HCT116 (cell line): ENCODE measurements at regions of chr4 and their contacts with region 1.

Region 1: DNA sequence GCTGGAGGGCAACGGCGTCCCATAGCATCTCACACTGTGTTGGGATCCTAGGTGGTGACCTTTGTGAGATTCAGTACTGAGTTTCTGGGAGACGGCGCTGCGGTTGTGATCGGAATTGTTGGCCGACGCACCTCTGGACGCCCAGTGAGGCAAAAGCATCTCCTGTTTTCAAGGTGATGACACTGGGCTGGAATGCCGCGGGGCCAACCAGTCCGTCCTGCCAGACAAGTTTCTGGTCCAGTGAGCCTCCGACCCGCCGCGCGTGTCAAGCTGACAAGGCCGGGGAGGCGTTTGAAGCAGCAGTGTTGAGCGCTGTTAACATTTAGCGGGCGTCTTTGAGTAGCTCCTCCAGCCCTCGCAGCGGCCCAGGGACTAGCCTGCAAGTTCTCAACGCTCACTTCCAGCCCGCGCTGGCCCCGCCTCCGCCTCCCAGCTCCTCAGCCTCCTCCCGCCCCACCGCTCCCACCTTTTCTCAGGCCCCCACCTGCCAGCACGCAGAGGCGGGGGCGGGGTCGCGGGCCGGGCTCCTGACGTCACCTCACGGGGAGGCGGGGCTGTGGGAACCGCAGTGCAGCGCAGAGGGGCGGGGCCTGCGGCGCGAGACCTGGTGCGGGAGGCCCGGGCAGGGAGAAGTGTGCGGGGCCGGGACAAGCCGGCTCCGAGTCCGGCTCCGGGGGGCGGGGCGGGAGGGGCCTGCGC is 476 bp upstream of the CDS1 start:
- DNase-seq: peak; percentile 81
- ATAC-seq: peak; percentile 81
- H3K4me3 ChIP-seq: peak overlapping the region; percentile 72 to 81
- H3K27ac ChIP-seq: peak overlapping the region; percentile 82
- H3K4me1 ChIP-seq: peaks cover 16 to 34% of the 10 kb centered on the region in 2 experiments
- H3K27me3 ChIP-seq: no peaks in the 10 kb centered on the region
- CTCF ChIP-seq: no peak
- POLR2A ChIP-seq: no peak
- RAD21 ChIP-seq: peak; percentile 22; the same call in 1 of the 2 replicates

Region 2: DNA sequence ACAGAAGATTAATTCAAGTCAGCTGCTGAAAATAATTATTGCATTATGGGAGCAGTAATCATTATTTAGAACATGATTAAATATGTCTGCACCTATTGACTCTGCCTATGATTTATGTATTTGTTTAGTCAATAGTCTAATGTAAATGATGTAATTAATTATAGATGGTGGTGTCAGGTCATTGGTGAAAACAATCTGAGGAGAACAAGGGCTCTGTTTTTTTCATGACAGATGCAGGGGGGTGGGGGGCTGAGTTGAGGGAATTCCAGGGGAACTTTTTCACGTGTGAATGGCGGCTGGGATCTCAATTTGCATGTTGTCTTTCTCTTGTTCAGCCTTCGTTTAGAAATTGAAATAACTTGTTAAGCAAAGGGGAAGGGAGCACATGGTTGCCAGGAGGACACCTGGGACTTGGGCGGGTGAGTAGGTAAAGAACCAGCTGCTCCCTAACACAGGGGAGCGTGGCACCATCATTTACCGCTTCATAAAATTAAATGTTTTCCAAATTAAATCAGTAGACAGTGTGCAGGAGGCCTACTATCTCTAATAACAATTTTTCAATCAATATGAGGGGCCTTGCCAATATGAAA is 148.7 kb before region 1 on chr4:
- CTCF ChIA-PET with region 1: no interaction called
- POLR2A ChIA-PET with region 1: no interaction called
- RAD21 ChIA-PET with region 1: no interaction called
- intact Hi-C with region 1: no loop called
- DNase-seq: no peak
- ATAC-seq: no peak
- H3K4me3 ChIP-seq: no peak overlapping the region
- H3K27ac ChIP-seq: no peak overlapping the region
- H3K4me1 ChIP-seq: no peaks in the 10 kb centered on the region
- H3K27me3 ChIP-seq: no peaks in the 10 kb centered on the region
- CTCF ChIP-seq: no peak
- POLR2A ChIP-seq: no peak
- RAD21 ChIP-seq: no peak

Region 3: GRCh38 chr4:84482564-84483563 is 99.6 kb before region 1 on chr4:
- CTCF ChIA-PET with region 1: no interaction called
- POLR2A ChIA-PET with region 1: no interaction called
- RAD21 ChIA-PET with region 1: no interaction called
- intact Hi-C with region 1: no loop called
- DNase-seq: no peak
- ATAC-seq: 0 out of 2 replicates have a peak, but pooled peaks have one; percentile 20
- H3K4me3 ChIP-seq: no peak overlapping the region
- H3K27ac ChIP-seq: no peak overlapping the region
- H3K4me1 ChIP-seq: peaks cover 0 to 5% of the 10 kb centered on the region in 2 experiments; a peak in 2 of 4 replicates
- H3K27me3 ChIP-seq: no peaks in the 10 kb centered on the region
- CTCF ChIP-seq: peak in 2 of 3 experiments; percentile 25 to 29; a peak in 2 of 6 replicates
- POLR2A ChIP-seq: no peak
- RAD21 ChIP-seq: no peak

Region 4: GRCh38 chr4:84529169-84529751 is 53.2 kb before region 1 on chr4:
- CTCF ChIA-PET with region 1: interaction called, 11 read pairs
- POLR2A ChIA-PET with region 1: no interaction called
- RAD21 ChIA-PET with region 1: no interaction called
- intact Hi-C with region 1: no loop called
- DNase-seq: peak; percentile 21
- ATAC-seq: peak; percentile 70
- H3K4me3 ChIP-seq: no peak overlapping the region
- H3K27ac ChIP-seq: no peak overlapping the region
- H3K4me1 ChIP-seq: peaks cover 12 to 16% of the 10 kb centered on the region in 2 experiments
- H3K27me3 ChIP-seq: no peaks in the 10 kb centered on the region
- CTCF ChIP-seq: peak in 2 of 3 experiments; percentile 52 to 77; a peak in 5 of 6 replicates
- POLR2A ChIP-seq: no peak
- RAD21 ChIP-seq: peak; percentile 68

Region 5: DNA sequence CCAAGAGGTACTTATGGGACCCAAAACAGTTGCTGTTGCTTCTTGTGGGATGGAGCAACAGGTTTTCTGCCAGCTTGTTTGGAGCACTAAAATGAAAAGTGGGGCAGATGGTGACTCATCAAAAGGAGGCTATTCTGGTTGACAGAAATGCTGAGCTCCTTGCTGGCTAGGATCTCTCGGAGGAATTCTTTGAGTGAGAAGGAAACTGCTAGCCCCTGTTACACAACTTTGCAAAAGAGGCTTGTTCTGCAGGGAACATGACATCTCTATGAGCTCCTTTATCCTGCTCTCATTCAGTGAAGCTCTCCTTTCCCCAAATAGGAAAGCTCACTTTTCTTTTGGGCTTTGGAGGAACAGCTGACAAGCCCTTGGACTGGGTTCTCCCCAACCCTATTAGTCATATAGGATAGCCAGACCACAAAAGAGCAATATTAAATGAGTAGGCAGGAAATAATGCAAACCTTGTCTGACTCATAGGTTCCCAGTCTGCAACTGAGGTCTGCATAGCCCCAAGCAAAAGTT is 108.8 kb after region 1 on chr4:
- CTCF ChIA-PET with region 1: interaction called, 6 read pairs
- POLR2A ChIA-PET with region 1: no interaction called
- RAD21 ChIA-PET with region 1: no interaction called
- intact Hi-C with region 1: loop called (anchors 5 kb)
- DNase-seq: peak; percentile 86
- ATAC-seq: peak; percentile 96
- H3K4me3 ChIP-seq: peak overlapping the region in 1 of 2 experiments; percentile 31; a peak in 2 of 4 replicates
- H3K27ac ChIP-seq: peak overlapping the region; percentile 52; the same call in 1 of the 2 replicates
- H3K4me1 ChIP-seq: peaks cover 20 to 33% of the 10 kb centered on the region in 2 experiments
- H3K27me3 ChIP-seq: no peaks in the 10 kb centered on the region
- CTCF ChIP-seq: no peak
- POLR2A ChIP-seq: no peak
- RAD21 ChIP-seq: 0 out of 2 replicates have a peak, but pooled peaks have one; percentile 16

Region 6: DNA sequence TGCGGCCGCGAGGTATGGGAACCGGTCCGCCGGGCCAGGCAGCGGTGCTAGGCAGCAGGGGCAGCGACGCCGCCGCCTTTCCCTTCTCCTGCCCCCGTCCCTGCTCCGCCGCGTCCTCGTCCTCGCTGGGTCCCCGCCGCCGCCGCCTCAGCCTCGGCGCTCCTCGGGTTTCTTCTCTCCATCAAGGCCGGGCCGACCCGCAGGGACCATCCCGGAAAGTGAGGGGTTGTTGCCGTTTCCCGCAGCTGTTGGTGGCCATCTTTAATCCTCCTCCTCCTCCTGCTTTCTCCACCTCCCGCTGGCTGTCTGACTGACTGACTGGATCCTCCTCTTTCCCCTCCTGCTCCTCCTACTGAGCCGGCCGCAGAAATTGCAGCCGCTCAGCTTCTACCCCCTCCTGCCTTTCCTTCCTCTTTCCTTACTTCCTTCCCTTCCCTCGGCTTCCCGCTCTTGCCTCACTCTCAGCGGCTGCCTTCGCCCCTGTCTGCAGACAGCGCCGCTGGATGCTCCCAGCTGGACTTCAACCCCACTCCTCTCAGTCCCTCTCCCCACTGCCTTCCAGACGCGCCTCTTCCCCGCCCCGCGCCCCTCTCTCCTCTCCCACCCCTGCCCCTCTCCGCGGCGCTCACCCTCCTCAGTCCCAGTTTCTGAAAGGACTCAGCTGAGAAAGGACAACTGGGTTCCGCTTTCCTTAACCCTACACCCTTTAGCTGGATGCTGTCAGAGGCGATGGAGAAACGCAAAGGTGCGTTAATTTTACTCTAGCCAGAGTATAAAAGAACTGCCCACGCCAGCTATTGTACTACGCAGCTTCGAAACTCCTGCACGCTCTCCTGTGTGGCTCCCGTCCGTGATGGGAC is 384.2 kb after region 1 on chr4 and contains the start of gene WDFY3:
- CTCF ChIA-PET with region 1: interaction called, 34 read pairs
- POLR2A ChIA-PET with region 1: no interaction called
- RAD21 ChIA-PET with region 1: interaction called, 4 to 5 read pairs
- intact Hi-C with region 1: loop called (anchors 2 kb)
- DNase-seq: peak; percentile 71
- ATAC-seq: peak; percentile 89
- H3K4me3 ChIP-seq: peak within 1 kb of the TSS; percentile 56 to 79
- H3K27ac ChIP-seq: peak within 1 kb of the TSS; percentile 88
- H3K4me1 ChIP-seq: peaks cover 4 to 18% of the 10 kb centered on the region in 2 experiments; a peak in 3 of 4 replicates
- H3K27me3 ChIP-seq: no peaks in the 10 kb centered on the region
- CTCF ChIP-seq: no peak
- POLR2A ChIP-seq: peak; percentile 43
- RAD21 ChIP-seq: 0 out of 2 replicates have a peak, but pooled peaks have one; percentile 18
- total RNA-seq, gene WDFY3: 39.9 TPM